ENCODE measurements at regions of chr17 and their contacts with region 1.

Region 1: DNA sequence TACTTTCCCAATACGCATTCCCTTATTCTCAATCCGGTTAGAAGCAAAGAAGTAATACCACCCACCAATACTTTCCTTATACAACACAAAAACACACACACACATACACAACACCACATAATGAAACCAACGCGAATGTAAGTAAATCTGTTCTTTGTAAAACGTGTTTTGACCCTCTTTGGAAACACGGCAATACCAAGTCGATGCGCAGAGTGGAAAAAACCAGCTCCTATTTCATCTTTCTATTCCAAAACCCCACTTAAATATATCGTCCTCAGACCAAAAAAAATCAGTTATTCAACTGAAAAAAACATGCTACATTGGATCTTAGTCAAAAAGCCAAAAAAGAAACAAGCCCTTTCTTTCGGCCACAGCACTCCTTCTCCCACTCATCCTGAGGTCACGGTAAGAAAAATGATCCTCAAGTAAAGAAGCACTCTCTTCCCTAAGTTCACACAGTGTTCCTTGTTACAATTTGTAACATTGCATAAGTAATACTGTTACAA is 31.0 kb upstream of the ARL4D start:
- DNase-seq: peak; percentile 79 to 91 (median 82)
- H3K4me3 ChIP-seq: peak overlapping the region; percentile 33 to 77 (median 54)
- H3K4me3 Mint-ChIP-seq: peak overlapping the region; percentile 96 to 97
- H3K27ac ChIP-seq: peak overlapping the region; percentile 97 to 99
- H3K27ac Mint-ChIP-seq: peak overlapping the region; percentile 98 to 100 (median 100)
- H3K4me1 ChIP-seq: peaks cover 35 to 39% of the 10 kb centered on the region in 2 donors
- H3K4me1 Mint-ChIP-seq: peaks cover 34% of the 10 kb centered on the region
- H3K27me3 ChIP-seq: no peaks in the 10 kb centered on the region
- H3K27me3 Mint-ChIP-seq: peaks cover 0 to 10% (median 0%) of the 10 kb centered on the region in 3 donors
- CTCF ChIP-seq: no peak

Region 2: DNA sequence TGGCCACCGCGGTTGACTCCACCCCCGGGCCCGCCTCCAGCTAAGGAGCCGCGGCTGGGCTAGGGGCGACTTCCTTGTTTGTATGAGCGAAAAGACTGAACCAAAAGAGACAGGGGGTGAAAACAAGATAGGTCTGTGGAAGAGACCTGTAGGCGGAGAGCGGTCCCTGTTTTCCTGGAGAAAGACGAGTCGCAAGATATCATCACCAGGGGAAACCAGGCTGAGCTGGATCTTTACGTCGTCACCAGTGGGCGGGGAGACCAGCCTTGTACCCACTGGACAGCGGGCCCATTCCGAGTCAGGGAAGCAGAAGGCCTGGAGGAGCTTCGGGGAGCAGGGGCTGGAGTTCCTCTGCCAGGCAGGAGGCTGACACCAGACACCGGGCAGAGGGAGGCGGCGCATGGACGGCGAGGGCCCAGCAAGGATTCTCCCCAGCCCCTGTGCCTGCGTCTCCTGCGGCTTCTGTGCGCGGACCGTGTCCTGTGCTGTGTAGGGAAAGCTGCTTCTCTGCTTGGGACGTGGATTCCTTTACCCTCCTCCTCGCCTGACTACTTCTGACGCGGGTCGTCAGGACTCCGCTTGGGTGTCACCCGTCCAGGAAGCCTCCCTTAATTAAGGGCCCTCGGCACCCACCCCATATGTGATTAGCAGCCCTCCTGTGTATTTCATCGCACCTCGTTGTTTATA is 20.7 kb after region 1 on chr17:
- intact Hi-C with region 1: loop called (anchors 2 kb)
- DNase-seq: peak; percentile 88 to 93 (median 93)
- H3K4me3 ChIP-seq: peak overlapping the region; percentile 77 to 83 (median 80)
- H3K4me3 Mint-ChIP-seq: peak overlapping the region; percentile 84 to 94
- H3K27ac ChIP-seq: peak overlapping the region; percentile 95 to 98
- H3K27ac Mint-ChIP-seq: peak overlapping the region; percentile 98 to 100 (median 99)
- H3K4me1 ChIP-seq: peaks cover 12 to 24% of the 10 kb centered on the region in 2 donors
- H3K4me1 Mint-ChIP-seq: peaks cover 23% of the 10 kb centered on the region
- H3K27me3 ChIP-seq: no peaks in the 10 kb centered on the region
- H3K27me3 Mint-ChIP-seq: peaks cover 0 to 5% (median 2%) of the 10 kb centered on the region in 3 donors
- CTCF ChIP-seq: no peak

Measured in CD14-positive monocyte (primary cell).